Ascending aorta (tissue), 2 donors: ENCODE measurements at regions of chr2 and their contacts with region 1.

Region 1: DNA sequence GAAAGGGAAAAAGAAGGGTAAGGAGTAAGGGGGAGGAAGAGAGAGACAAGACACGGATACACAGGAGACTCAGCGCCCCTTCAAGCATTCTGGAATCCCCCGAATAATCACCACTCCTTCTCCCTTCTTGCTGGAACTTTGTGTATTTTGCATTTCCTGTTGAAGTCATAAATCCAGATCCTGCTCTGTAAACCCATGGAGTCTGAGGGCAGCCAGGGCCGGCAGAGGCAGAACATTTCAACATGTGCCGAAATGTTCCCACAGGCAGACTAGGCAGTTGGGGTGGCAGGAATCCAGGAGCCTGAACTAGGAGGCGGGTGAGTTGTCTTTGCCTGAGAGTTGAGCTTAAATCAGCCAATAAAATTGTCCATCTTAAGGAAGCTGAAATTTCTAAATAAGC is 193.1 kb downstream of the SH3RF3 start:
- DNase-seq: peak; percentile 80 to 98
- H3K4me3 ChIP-seq: peak overlapping the region in 1 of 2 donors; percentile 17
- H3K27ac ChIP-seq: peak overlapping the region; percentile 86 to 88
- H3K4me1 ChIP-seq: peaks cover 30 to 67% of the 10 kb centered on the region in 2 donors
- H3K27me3 ChIP-seq: no peaks in the 10 kb centered on the region
- CTCF ChIP-seq: no peak

Region 2: DNA sequence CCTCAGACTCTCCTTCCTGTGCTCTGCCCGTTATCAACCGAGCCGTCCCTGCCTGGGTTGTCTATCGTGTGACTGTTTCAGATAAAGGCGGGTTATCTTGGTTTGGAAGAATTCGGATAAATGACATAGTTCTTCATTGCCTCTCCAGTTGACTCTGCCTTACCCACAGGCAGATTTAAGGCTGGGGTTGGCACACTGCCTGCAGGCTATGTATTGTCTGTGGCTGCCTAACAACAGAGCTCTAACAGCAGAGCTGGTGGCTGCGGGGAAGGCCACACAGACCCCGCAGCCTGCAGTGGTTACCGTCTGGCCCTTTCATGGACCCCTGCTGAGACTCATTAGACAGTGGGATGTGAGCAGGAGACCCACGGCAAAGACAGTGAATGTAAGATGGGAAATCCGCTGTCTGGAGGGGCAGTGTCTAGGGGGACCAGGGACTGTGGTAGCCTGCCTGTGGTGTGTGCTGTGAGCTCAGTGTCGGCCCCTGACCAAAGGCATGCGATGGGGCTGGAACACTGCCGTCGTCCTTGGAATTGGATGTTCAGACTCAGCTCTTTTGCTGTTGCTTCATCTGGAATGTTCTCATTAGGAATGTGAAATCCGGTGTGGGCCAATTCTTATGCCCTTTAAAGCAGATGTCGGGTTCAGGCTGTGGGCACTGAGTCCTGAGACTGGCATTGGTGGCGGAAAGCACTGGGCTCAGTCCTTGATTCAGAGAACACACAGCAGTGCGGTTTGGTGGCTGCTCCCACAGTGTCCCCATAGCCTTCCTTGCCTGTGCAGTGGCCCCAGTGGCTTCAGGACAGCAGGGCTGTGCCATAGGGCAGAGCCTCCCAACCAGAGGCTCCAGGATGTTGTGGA is 148.6 kb before region 1 on chr2:
- intact Hi-C with region 1: loop called (anchors 1 kb)
- DNase-seq: peak; percentile 75 to 97
- H3K4me3 ChIP-seq: peak overlapping the region; percentile 6 to 31
- H3K27ac ChIP-seq: peak overlapping the region; percentile 95 to 98
- H3K4me1 ChIP-seq: peaks cover 27 to 70% of the 10 kb centered on the region in 2 donors
- H3K27me3 ChIP-seq: no peaks in the 10 kb centered on the region
- CTCF ChIP-seq: no peak

Region 3: GRCh38 chr2:109195193-109196045 is 126.7 kb before region 1 on chr2:
- intact Hi-C with region 1: loop called (anchors 5 kb)
- DNase-seq: peak in 1 of 2 donors; percentile 72
- H3K4me3 ChIP-seq: peak overlapping the region in 1 of 2 donors; percentile 0
- H3K27ac ChIP-seq: peak overlapping the region; percentile 67 to 79
- H3K4me1 ChIP-seq: peaks cover 35 to 53% of the 10 kb centered on the region in 2 donors
- H3K27me3 ChIP-seq: no peaks in the 10 kb centered on the region
- CTCF ChIP-seq: no peak

Region 4: DNA sequence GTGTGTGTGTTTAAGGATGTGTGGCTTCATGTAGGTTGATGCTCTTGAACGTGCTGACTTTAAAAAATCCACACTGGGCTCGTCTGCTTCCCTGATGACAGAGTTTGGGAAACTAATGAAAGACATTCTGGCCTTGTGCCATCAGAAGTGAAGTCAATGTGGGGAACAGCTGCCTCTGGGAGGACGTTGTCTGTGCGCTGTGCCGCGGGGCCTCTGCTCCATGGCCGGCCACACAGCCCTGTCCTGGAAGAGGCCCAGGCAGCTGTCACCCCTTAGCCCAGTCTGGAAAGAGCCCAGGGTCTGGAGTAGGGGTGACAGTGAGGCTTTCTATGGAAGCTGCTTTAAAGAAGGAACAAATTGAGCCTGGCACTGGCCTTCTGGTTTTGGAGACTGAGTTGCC is 37.3 kb before region 1 on chr2:
- intact Hi-C with region 1: loop called (anchors 5 kb)
- DNase-seq: no peak
- H3K4me3 ChIP-seq: peak overlapping the region in 1 of 2 donors; percentile 4
- H3K27ac ChIP-seq: peak overlapping the region; percentile 31 to 37
- H3K4me1 ChIP-seq: peaks cover 14 to 30% of the 10 kb centered on the region in 2 donors
- H3K27me3 ChIP-seq: no peaks in the 10 kb centered on the region
- CTCF ChIP-seq: no peak

Region 5: GRCh38 chr2:109457794-109458193 is 135.7 kb after region 1 on chr2:
- intact Hi-C with region 1: no loop called
- DNase-seq: peak in 1 of 2 donors; percentile 66
- H3K4me3 ChIP-seq: no peak overlapping the region
- H3K27ac ChIP-seq: peak overlapping the region; percentile 28 to 50
- H3K4me1 ChIP-seq: peaks cover 9 to 32% of the 10 kb centered on the region in 2 donors
- H3K27me3 ChIP-seq: no peaks in the 10 kb centered on the region
- CTCF ChIP-seq: peak in 1 of 3 experiments; percentile 12

Region 6: DNA sequence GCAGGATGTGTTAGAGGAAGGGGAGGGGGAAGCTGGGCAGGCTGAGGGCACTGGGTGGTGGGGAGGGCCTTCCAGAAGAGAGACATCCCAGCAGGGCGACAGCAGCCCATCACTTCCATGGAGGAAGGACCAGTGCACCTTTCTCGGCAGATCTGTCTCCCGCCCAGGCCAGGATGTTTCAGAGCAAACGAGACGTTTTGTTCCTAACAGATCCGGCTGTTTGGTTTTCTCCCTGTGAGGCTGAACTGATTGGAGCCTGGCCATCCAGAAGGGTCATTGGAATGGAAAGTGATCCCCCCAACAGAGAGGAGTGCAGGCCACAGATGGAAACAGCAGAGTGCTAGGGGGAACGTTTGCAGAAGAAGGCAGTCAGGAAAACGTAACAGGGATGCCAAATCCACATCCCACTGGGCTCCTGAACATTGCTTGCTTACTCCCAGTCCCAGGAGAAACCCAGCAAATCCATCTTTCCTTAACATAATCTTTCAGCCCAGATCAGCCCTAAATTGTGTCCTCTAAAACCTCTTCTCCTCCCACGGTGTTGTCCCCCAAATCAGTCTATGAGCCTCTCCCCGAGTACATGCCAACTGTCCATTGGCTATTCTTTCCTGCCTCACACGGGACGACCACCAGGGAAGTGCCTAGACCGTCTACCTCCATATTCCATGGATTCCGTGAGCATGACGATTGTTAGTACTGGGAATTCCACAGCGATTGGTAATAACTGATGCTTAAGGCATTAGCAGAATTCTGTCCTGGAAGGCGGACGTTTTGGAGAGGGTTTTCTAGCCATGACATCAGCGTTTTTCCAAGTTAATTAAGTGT is 164.8 kb after region 1 on chr2:
- intact Hi-C with region 1: loop called (anchors 10 kb)
- DNase-seq: no peak
- H3K4me3 ChIP-seq: no peak overlapping the region
- H3K27ac ChIP-seq: peak overlapping the region; percentile 75 to 89
- H3K4me1 ChIP-seq: peaks cover 16 to 47% of the 10 kb centered on the region in 2 donors
- H3K27me3 ChIP-seq: no peaks in the 10 kb centered on the region
- CTCF ChIP-seq: no peak

Region 7: GRCh38 chr2:109644576-109645275 is 322.6 kb after region 1 on chr2:
- intact Hi-C with region 1: no loop called
- DNase-seq: peak in 1 of 2 donors; percentile 71
- H3K4me3 ChIP-seq: peak overlapping the region in 1 of 2 donors; percentile 45
- H3K27ac ChIP-seq: peak overlapping the region; percentile 87 to 88
- H3K4me1 ChIP-seq: peaks cover 4 to 23% of the 10 kb centered on the region in 2 donors
- H3K27me3 ChIP-seq: no peaks in the 10 kb centered on the region
- CTCF ChIP-seq: no peak